IMR-90 (cell line): ENCODE measurements at regions of chr1 and their contacts with region 1.

Region 1: GRCh38 chr1:17244816-17245740 is 3.8 kb upstream of the PADI3 start:
- DNase-seq: no peak
- ATAC-seq: peak; percentile 70
- H3K4me3 ChIP-seq: no peak overlapping the region
- H3K27ac ChIP-seq: no peak overlapping the region
- H3K4me1 ChIP-seq: no peaks in the 10 kb centered on the region
- H3K27me3 ChIP-seq: peaks cover 23% of the 10 kb centered on the region
- CTCF ChIP-seq: no peak
- POLR2A ChIP-seq: no peak
- RAD21 ChIP-seq: no peak

Region 2: GRCh38 chr1:17215545-17215890 is 29.6 kb before region 1 on chr1:
- CTCF ChIA-PET with region 1: no interaction called
- POLR2A ChIA-PET with region 1: no interaction called
- dilution Hi-C with region 1: no loop called
- in situ Hi-C with region 1: no loop called
- intact Hi-C with region 1: no loop called
- DNase-seq: no peak
- ATAC-seq: no peak
- H3K4me3 ChIP-seq: no peak overlapping the region
- H3K27ac ChIP-seq: no peak overlapping the region
- H3K4me1 ChIP-seq: peaks cover 10% of the 10 kb centered on the region
- H3K27me3 ChIP-seq: peaks cover 25% of the 10 kb centered on the region
- CTCF ChIP-seq: no peak
- POLR2A ChIP-seq: no peak
- RAD21 ChIP-seq: no peak

Region 3: GRCh38 chr1:17330856-17331255 is 85.8 kb after region 1 on chr1:
- CTCF ChIA-PET with region 1: no interaction called
- POLR2A ChIA-PET with region 1: no interaction called
- dilution Hi-C with region 1: no loop called
- in situ Hi-C with region 1: no loop called
- intact Hi-C with region 1: loop called (anchors 5 kb)
- DNase-seq: no peak
- ATAC-seq: no peak
- H3K4me3 ChIP-seq: no peak overlapping the region
- H3K27ac ChIP-seq: no peak overlapping the region
- H3K4me1 ChIP-seq: no peaks in the 10 kb centered on the region
- H3K27me3 ChIP-seq: peaks cover 13% of the 10 kb centered on the region
- CTCF ChIP-seq: no peak
- POLR2A ChIP-seq: no peak
- RAD21 ChIP-seq: no peak